Sciatic nerve (tissue), 2 donors: ENCODE measurements at regions of chr14 and their contacts with region 1.

Region 1: GRCh38 chr14:102314242-102315011 is 5.1 kb upstream of the ZNF839 start:
- DNase-seq: peak; percentile 92
- ATAC-seq: peak; percentile 84

Region 2: GRCh38 chr14:102235275-102235897 is 79.0 kb before region 1 on chr14:
- intact Hi-C with region 1: loop called (anchors 5 kb)
- DNase-seq: peak; percentile 92
- ATAC-seq: peak; percentile 98

Region 3: GRCh38 chr14:102390064-102390855 is 75.8 kb after region 1 on chr14:
- intact Hi-C with region 1: no loop called
- DNase-seq: no peak
- ATAC-seq: peak; percentile 28

Region 4: DNA sequence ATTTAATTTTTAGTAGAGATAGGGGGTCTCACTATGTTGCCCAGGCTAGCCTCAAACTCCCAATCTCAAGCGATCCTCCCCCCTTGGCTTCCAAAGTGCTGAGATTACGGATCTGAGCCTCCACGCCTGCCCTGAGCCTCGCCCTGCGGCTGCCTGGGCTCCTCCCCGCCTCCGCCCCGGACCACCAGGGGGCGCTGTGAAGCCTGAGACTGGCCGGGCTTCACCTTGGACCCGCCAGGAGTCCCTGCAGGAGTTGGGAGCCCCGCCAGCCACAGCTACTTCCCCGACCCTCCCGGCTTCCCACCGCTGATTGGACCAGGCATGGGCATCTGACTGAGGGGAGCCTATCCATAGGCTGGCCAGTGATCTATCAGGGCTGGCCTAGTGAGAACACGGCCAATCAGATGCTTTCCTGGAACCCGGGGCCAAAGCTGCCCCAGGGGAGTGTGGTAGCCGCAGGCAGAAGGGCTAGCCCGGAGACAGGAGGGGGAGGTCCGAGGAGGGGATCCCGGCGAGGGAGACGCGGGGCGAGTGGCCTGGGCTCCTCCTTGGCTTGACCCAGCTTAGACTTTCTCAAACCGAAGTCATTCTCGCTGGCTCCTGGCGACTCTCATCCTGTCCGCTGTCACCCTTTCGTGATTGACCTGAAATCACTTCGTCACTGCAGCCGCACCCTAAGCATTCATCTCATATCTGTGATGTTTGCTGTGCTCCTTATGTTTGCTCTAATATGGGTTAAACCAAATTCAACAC is 210.2 kb after region 1 on chr14:
- intact Hi-C with region 1: no loop called
- DNase-seq: peak; percentile 99
- ATAC-seq: peak; percentile 99